Endothelial cell of umbilical vein (primary cell): ENCODE measurements at regions of chr1 and their contacts with region 1.

Region 1: GRCh38 chr1:160376525-160377131 is 9.8 kb downstream of the NHLH1 start:
- DNase-seq: peak; percentile 65
- H3K4me3 ChIP-seq: no peak overlapping the region
- H3K27ac ChIP-seq: no peak overlapping the region
- H3K4me1 ChIP-seq: no peaks in the 10 kb centered on the region
- H3K27me3 ChIP-seq: peaks cover 20 to 26% of the 10 kb centered on the region in 2 experiments
- CTCF ChIP-seq: peak; percentile 83 to 92
- POLR2A ChIP-seq: no peak

Region 2: DNA sequence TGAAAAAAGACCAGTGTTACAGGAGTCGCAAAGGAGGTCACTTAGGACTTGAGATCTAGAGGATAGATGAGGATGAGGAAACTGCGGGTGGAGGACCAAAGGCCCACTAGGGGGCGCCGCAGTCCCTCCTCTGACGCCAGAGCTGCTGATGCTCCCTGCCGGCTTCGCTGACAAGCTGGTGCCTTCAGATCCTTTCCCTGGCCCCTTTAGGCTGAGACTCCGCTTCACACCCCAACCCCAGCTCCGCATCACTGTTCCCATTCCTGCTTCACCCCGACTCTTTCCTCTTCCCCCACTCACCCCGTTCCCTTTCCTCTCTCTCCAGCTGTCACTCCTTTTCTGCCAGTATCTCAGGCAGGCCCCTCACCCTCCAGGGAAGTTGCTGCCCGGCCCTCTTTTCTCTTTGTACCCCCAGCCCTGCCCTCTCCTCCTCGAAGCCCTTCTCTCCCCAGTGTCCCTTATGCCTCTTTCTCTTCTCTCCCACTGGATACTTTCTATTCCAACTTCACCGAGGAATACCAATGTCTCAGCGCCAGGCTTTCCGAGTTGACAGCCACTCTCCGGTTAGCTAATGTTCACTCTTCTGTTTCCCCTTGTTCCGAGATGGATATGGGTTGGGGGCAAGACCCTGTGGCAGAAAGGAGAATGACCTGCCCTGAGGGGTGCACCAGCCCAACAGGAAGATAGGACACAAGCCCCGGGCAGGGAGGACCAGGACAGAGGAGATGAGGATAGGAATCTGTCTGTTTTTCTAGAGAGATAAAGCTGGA is 290.8 kb before region 1 on chr1:
- CTCF ChIA-PET with region 1: interaction called, 75 read pairs
- POLR2A ChIA-PET with region 1: no interaction called
- dilution Hi-C with region 1: no loop called
- intact Hi-C with region 1: loop called (anchors 1 kb)
- DNase-seq: peak; percentile 65
- H3K4me3 ChIP-seq: no peak overlapping the region
- H3K27ac ChIP-seq: no peak overlapping the region
- H3K4me1 ChIP-seq: no peaks in the 10 kb centered on the region
- H3K27me3 ChIP-seq: peaks cover 35 to 37% of the 10 kb centered on the region in 2 experiments
- CTCF ChIP-seq: peak; percentile 82 to 99
- POLR2A ChIP-seq: no peak

Region 3: GRCh38 chr1:160219062-160219929 is 157.3 kb before region 1 on chr1:
- CTCF ChIA-PET with region 1: interaction called, 11 read pairs
- POLR2A ChIA-PET with region 1: no interaction called
- dilution Hi-C with region 1: no loop called
- intact Hi-C with region 1: no loop called
- DNase-seq: peak; percentile 73
- H3K4me3 ChIP-seq: no peak overlapping the region
- H3K27ac ChIP-seq: peak overlapping the region; percentile 16
- H3K4me1 ChIP-seq: peaks cover 12% of the 10 kb centered on the region
- H3K27me3 ChIP-seq: no peaks in the 10 kb centered on the region
- CTCF ChIP-seq: peak; percentile 52 to 70
- POLR2A ChIP-seq: no peak

Region 4: DNA sequence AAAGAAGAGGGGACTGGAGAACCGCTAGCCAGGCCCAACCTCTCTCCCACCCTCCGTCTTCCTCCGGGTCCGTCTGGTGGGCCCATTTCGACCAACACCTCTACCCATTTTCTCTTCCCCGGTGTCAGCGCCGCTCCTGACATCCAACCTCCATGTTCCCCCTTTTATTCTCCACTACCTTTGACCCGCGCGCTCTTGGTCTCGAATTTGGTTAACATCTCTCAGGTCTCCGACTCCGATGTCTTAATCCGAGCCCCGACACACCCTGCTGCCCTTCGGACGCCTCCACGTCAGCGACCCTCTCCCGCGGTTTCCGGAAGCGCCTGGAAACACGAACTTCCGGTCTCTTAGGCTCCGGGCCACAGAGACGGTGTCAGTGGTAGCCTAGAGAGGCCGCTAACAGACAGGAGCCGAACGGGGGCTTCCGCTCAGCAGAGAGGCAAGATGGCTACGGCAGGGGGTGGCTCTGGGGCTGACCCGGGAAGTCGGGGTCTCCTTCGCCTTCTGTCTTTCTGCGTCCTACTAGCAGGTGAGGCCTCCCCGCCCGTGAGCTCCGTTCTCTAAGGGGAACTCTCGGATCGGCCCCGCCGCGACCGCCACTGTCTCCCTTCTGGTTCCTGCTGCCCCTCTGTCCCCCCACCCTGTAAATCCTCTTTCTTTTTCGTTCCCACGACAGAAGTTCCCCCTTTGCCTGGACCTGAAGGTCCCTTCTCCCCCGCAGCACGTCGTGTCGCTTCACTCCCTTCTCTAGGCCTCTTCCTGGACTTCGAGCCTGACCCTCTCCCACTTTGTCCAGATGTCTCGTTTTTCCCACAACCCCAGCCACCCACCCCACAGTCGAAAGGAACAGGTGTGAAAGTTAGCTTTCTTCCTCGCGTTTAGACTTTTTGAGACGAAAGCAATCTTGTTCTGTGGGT is 33.4 kb before region 1 on chr1 and contains the starts of genes COPA and NCSTN:
- CTCF ChIA-PET with region 1: interaction called, 17 read pairs
- POLR2A ChIA-PET with region 1: no interaction called
- dilution Hi-C with region 1: no loop called
- intact Hi-C with region 1: no loop called
- DNase-seq: peak; percentile 95
- H3K4me3 ChIP-seq: peak within 1 kb of the TSS; percentile 51 to 92 (median 73)
- H3K27ac ChIP-seq: peak within 1 kb of the TSS; percentile 73
- H3K4me1 ChIP-seq: peaks cover 36% of the 10 kb centered on the region
- H3K27me3 ChIP-seq: no peaks in the 10 kb centered on the region
- CTCF ChIP-seq: no peak
- POLR2A ChIP-seq: peak; percentile 92
- total RNA-seq, gene COPA: 167 and 185 TPM in 2 replicates
- total RNA-seq, gene NCSTN: 92.5 and 95.4 TPM in 2 replicates

Region 5: DNA sequence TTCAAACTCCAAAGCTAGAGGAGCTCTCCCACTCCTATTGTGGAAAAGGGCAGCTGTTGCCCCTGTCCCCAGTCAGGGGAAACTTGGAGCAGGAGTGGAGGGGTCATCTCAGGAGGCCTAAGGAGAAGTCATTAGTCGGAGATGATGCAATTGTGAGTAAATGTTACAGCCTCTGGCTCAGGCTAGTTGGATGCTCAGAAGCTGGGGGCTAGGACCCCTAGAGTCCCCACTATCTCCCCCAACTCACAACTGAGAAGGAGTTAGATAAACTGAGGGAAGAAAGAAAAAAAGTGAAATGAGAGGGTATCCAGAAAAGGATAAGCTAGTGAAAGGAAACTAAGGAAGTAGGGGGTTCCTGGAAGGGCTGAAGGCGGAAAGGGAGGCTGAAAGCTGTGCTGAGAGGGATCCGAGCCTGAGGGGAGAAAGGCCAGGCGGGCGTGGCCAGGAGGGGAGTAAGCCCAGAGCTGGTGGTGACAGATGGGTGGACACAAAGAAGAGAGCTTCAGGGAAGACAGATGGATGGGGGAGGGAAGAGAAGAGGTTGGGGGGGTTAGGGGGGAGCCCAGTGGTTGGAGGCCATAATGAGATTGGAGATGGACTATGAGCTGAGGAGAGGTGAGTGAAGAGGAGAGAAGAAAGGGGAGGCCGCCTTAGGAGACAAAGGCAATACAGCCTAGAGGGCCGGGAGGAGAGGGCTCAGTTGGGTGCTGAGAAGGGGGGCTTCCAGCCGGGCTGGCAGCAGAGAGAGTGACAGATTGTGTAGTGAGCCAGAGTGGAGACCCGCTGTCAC is 14.3 kb before region 1 on chr1:
- CTCF ChIA-PET with region 1: interaction called, 100 read pairs
- POLR2A ChIA-PET with region 1: no interaction called
- dilution Hi-C with region 1: no loop called
- intact Hi-C with region 1: no loop called
- DNase-seq: no peak
- H3K4me3 ChIP-seq: no peak overlapping the region
- H3K27ac ChIP-seq: no peak overlapping the region
- H3K4me1 ChIP-seq: no peaks in the 10 kb centered on the region
- H3K27me3 ChIP-seq: peaks cover 0 to 1% of the 10 kb centered on the region in 2 experiments
- CTCF ChIP-seq: no peak
- POLR2A ChIP-seq: no peak

Region 6: DNA sequence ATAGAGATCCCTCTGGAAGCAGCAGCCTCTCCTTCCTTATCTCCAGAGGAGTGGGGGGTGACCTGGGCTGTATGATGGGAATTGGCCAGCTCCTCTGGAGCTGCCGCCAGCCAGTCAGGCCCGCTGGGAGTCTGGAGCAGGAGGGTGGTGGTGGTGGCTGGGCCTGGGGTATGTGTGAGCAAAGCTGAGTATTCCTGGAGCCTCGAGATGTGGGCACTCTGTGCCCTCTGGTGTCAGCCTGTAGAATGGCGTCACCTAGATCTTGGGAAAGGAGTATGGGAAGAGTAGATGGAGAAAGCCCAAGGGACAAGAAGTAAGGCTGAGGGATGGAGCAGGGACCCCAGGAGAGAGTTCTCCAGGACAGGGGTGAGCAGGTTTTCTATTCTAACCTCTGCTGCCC is 39.7 kb after region 1 on chr1:
- CTCF ChIA-PET with region 1: interaction called, 12 read pairs
- POLR2A ChIA-PET with region 1: no interaction called
- dilution Hi-C with region 1: no loop called
- intact Hi-C with region 1: loop called (anchors 1 kb)
- DNase-seq: peak; percentile 31
- H3K4me3 ChIP-seq: no peak overlapping the region
- H3K27ac ChIP-seq: no peak overlapping the region
- H3K4me1 ChIP-seq: no peaks in the 10 kb centered on the region
- H3K27me3 ChIP-seq: peaks cover 23 to 35% of the 10 kb centered on the region in 2 experiments
- CTCF ChIP-seq: peak; percentile 47 to 56
- POLR2A ChIP-seq: no peak

Region 7: DNA sequence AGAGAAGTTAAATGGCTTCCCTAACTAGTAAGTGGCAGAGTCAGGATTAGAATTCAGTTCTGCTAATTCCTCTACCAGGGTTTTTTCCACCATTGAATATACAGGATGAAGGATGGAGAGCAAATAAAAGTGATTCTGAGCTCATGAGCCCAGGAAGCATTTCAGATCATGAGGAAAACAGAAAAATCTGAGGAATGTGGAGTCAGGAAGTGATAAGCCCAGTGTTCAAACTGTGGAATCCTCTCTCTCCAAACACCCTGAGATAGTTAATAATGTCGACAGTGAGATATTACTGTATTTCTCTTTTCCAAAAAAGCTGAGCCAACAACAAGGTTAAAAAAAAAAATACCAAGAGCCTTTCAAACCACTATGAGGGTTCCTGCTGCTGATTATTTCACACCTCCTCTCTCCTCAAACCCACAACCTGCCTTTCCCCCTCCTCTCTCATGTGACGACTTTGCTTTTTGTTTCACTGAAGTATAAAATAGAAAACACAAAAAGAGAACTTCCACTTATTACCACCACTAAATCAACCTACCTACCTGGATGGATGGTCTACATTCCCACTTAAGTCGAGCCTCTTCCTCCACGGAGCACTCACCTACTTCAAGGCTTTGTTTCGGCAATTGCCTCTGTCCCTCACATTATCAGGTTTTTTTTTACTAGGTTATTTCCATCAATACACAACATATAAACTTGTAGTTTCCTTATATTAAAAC is 261.4 kb after region 1 on chr1:
- CTCF ChIA-PET with region 1: no interaction called
- POLR2A ChIA-PET with region 1: no interaction called
- dilution Hi-C with region 1: no loop called
- intact Hi-C with region 1: no loop called
- DNase-seq: peak; percentile 10
- H3K4me3 ChIP-seq: no peak overlapping the region
- H3K27ac ChIP-seq: no peak overlapping the region
- H3K4me1 ChIP-seq: peaks cover 9% of the 10 kb centered on the region
- H3K27me3 ChIP-seq: no peaks in the 10 kb centered on the region
- CTCF ChIP-seq: no peak
- POLR2A ChIP-seq: no peak